CD4-positive, alpha-beta memory T cell (primary cell): ENCODE measurements at regions of chr7 and their contacts with region 1.

Region 1: DNA sequence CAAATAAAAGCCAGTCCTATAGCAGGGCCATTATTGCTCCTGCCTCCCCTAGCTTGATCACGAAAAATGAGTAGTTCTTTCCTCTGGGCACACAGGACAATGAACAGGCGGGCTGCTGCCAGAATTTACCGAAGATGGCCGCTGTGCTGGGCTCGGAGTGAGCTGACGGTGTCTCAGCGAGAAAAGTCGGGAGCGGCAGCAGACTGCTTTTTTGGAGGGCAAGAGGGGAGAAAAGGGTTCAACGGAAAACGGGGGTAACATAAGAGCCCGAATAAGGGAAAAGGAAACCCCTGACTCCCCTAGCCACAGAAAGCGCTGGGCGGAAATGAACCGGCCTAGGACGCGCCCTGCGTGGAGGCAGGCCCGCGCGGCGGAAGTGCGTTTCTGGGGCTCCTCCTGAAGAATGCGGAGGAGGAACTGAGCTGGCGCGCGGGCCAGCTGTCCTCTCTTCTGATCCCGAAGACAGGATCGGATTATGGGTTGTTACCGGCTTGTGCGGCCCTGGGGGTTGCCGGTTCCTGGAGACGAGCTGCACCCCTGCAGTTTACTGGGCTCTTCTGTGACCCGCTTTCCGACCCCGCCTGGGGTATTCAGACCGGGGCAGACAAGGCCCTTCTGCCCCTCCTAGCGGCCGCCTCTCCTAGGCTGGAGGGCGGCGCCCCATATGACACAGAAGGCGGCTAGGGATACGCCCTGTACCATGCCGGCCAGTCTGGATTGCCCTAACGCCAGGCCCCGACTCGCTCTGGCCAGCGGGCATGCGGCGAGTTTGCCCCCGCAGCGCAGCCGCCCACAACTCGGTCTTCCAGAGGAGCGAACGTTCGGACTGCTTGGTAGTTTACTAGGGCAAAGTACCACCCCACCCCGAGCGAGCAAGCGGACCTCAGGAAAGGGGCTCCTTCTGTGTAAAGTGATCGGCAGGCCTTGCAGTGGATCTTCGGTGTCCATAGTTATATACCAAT is 30.1 kb upstream of the KMT2E start:
- DNase-seq: peak; percentile 84 to 91 (median 86)
- H3K4me3 ChIP-seq: peak overlapping the region; percentile 47 to 92
- H3K4me3 Mint-ChIP-seq: peak overlapping the region; percentile 97 to 100 (median 100)
- H3K27ac ChIP-seq: peak overlapping the region; percentile 98
- H3K27ac Mint-ChIP-seq: peak overlapping the region in 6 of 7 donors; percentile 99 to 100 (median 100)
- H3K4me1 ChIP-seq: peaks cover 37% of the 10 kb centered on the region
- H3K4me1 Mint-ChIP-seq: peaks cover 33 to 63% (median 42%) of the 10 kb centered on the region in 4 donors
- H3K27me3 ChIP-seq: no peaks in the 10 kb centered on the region
- H3K27me3 Mint-ChIP-seq: no peaks in the 10 kb centered on the region

Region 2: GRCh38 chr7:104621321-104621720 is 362.5 kb before region 1 on chr7:
- CTCF ChIA-PET with region 1: no interaction called
- POLR2A ChIA-PET with region 1: no interaction called
- intact Hi-C with region 1: no loop called
- DNase-seq: no peak
- H3K4me3 ChIP-seq: no peak overlapping the region
- H3K4me3 Mint-ChIP-seq: no peak overlapping the region
- H3K27ac ChIP-seq: no peak overlapping the region
- H3K27ac Mint-ChIP-seq: no peak overlapping the region
- H3K4me1 ChIP-seq: no peaks in the 10 kb centered on the region
- H3K4me1 Mint-ChIP-seq: no peaks in the 10 kb centered on the region
- H3K27me3 ChIP-seq: no peaks in the 10 kb centered on the region
- H3K27me3 Mint-ChIP-seq: peaks cover 0 to 2% of the 10 kb centered on the region in 2 donors

Region 3: GRCh38 chr7:104971290-104972071 is 12.4 kb before region 1 on chr7:
- CTCF ChIA-PET with region 1: interaction called, 21 read pairs
- POLR2A ChIA-PET with region 1: interaction called, 9 read pairs
- intact Hi-C with region 1: no loop called
- DNase-seq: no peak
- H3K4me3 ChIP-seq: no peak overlapping the region
- H3K4me3 Mint-ChIP-seq: no peak overlapping the region
- H3K27ac ChIP-seq: no peak overlapping the region
- H3K27ac Mint-ChIP-seq: peak overlapping the region in 2 of 7 donors; percentile 51 to 59
- H3K4me1 ChIP-seq: no peaks in the 10 kb centered on the region
- H3K4me1 Mint-ChIP-seq: peaks cover 0 to 7% (median 0%) of the 10 kb centered on the region in 4 donors
- H3K27me3 ChIP-seq: no peaks in the 10 kb centered on the region
- H3K27me3 Mint-ChIP-seq: no peaks in the 10 kb centered on the region

Region 4: GRCh38 chr7:105046414-105046813 is 62.6 kb after region 1 on chr7:
- CTCF ChIA-PET with region 1: interaction called, 93 read pairs
- POLR2A ChIA-PET with region 1: interaction called, 44 read pairs
- intact Hi-C with region 1: loop called (anchors 1 kb)
- DNase-seq: no peak
- H3K4me3 ChIP-seq: no peak overlapping the region
- H3K4me3 Mint-ChIP-seq: no peak overlapping the region
- H3K27ac ChIP-seq: no peak overlapping the region
- H3K27ac Mint-ChIP-seq: peak overlapping the region in 3 of 7 donors; percentile 10 to 74 (median 70)
- H3K4me1 ChIP-seq: peaks cover 44% of the 10 kb centered on the region
- H3K4me1 Mint-ChIP-seq: peaks cover 42 to 64% (median 54%) of the 10 kb centered on the region in 4 donors
- H3K27me3 ChIP-seq: no peaks in the 10 kb centered on the region
- H3K27me3 Mint-ChIP-seq: no peaks in the 10 kb centered on the region

Region 5: GRCh38 chr7:105098863-105099515 is 115.1 kb after region 1 on chr7:
- CTCF ChIA-PET with region 1: interaction called, 16 read pairs
- POLR2A ChIA-PET with region 1: interaction called, 3 read pairs
- intact Hi-C with region 1: loop called (anchors 5 kb)
- DNase-seq: no peak
- H3K4me3 ChIP-seq: no peak overlapping the region
- H3K4me3 Mint-ChIP-seq: peak overlapping the region in 1 of 8 donors; percentile 50
- H3K27ac ChIP-seq: no peak overlapping the region
- H3K27ac Mint-ChIP-seq: peak overlapping the region; percentile 36 to 79 (median 60)
- H3K4me1 ChIP-seq: peaks cover 25% of the 10 kb centered on the region
- H3K4me1 Mint-ChIP-seq: peaks cover 29 to 62% (median 45%) of the 10 kb centered on the region in 4 donors
- H3K27me3 ChIP-seq: no peaks in the 10 kb centered on the region
- H3K27me3 Mint-ChIP-seq: no peaks in the 10 kb centered on the region

Region 6: GRCh38 chr7:105336009-105336408 is 352.1 kb after region 1 on chr7:
- CTCF ChIA-PET with region 1: interaction called, 7 read pairs
- POLR2A ChIA-PET with region 1: no interaction called
- intact Hi-C with region 1: loop called (anchors 1 kb)
- DNase-seq: peak in 3 of 5 donors; percentile 17 to 34 (median 22)
- H3K4me3 ChIP-seq: no peak overlapping the region
- H3K4me3 Mint-ChIP-seq: no peak overlapping the region
- H3K27ac ChIP-seq: no peak overlapping the region
- H3K27ac Mint-ChIP-seq: no peak overlapping the region
- H3K4me1 ChIP-seq: peaks cover 13% of the 10 kb centered on the region
- H3K4me1 Mint-ChIP-seq: peaks cover 19 to 31% (median 26%) of the 10 kb centered on the region in 4 donors
- H3K27me3 ChIP-seq: no peaks in the 10 kb centered on the region
- H3K27me3 Mint-ChIP-seq: no peaks in the 10 kb centered on the region

Region 7: GRCh38 chr7:105487579-105488571 is 504.0 kb after region 1 on chr7:
- CTCF ChIA-PET with region 1: interaction called, 3 read pairs
- POLR2A ChIA-PET with region 1: no interaction called
- intact Hi-C with region 1: loop called (anchors 1 kb)
- DNase-seq: peak in 4 of 5 donors; percentile 28 to 40 (median 30)
- H3K4me3 ChIP-seq: no peak overlapping the region
- H3K4me3 Mint-ChIP-seq: no peak overlapping the region
- H3K27ac ChIP-seq: no peak overlapping the region
- H3K27ac Mint-ChIP-seq: peak overlapping the region in 3 of 7 donors; percentile 0 to 86 (median 33)
- H3K4me1 ChIP-seq: no peaks in the 10 kb centered on the region
- H3K4me1 Mint-ChIP-seq: peaks cover 0 to 4% (median 3%) of the 10 kb centered on the region in 4 donors
- H3K27me3 ChIP-seq: no peaks in the 10 kb centered on the region
- H3K27me3 Mint-ChIP-seq: no peaks in the 10 kb centered on the region